Thyroid gland (tissue), 4 donors: ENCODE measurements at regions of chr19 and their contacts with region 1.

Region 1: GRCh38 chr19:7293795-7294570 is at the start of gene INSR:
- DNase-seq: peak; percentile 86 to 91
- H3K4me3 ChIP-seq: peak within 1 kb of the TSS; percentile 37 to 98 (median 65)
- H3K27ac ChIP-seq: peak within 1 kb of the TSS; percentile 44 to 89 (median 77)
- H3K4me1 ChIP-seq: peaks cover 16 to 31% of the 10 kb centered on the region in 2 donors
- H3K27me3 ChIP-seq: no peaks in the 10 kb centered on the region
- CTCF ChIP-seq: no peak
- POLR2A ChIP-seq: peak in 1 of 2 donors; percentile 55
- total RNA-seq, gene INSR: 38.9 to 101 (median 67.7) TPM

Region 2: GRCh38 chr19:7152568-7152967 is 141.4 kb before region 1 on chr19:
- intact Hi-C with region 1: loop called (anchors 5 kb)
- DNase-seq: no peak
- H3K4me3 ChIP-seq: no peak overlapping the region
- H3K27ac ChIP-seq: no peak overlapping the region
- H3K4me1 ChIP-seq: no peaks in the 10 kb centered on the region
- H3K27me3 ChIP-seq: no peaks in the 10 kb centered on the region
- CTCF ChIP-seq: no peak
- POLR2A ChIP-seq: no peak

Region 3: DNA sequence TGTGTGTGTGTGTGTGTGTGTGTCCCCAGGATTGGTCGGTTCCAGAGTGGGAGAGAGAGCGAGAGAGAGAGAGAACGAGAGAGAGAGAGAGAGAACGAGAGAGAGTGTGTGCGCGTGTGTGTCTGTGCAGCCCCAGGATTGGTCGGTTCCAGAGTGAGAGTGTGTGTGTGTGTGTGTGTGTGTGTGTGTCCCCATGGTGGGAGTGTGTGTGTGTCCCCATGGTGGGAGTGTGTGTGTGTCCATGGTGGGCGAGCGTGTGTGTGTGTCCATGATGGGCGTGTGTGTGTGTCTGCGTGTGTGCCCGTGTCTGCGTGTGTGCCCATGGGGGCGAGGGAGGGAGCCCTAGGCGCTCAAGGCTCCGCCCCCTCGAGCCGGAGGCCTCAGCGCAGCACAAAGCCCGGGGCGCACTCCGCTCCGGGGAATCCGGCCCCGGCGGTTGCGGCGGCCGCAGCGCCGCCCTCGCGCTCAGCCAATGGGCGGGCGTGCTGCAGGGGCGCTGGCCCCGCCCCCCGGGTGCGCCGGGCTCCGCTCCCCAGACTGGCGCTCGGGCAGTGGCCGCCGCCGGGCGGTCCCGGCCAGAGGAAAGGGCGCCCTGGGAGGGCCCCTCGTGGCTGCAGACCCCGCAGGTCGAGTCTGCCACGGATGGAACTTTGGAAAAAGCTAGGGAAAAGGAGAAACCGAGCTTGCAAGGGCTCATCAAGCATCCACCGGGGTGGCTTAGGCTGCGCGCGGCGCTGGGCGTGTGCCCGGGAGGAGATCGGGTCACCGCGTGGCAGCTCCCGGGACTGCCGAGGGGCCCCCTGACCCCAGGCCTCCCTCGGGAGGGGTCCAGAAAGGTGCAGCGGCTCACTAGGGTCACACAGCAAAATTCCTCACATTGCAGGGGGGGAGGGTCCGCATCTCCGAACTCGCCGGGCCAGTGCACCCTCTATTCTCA is 96.0 kb before region 1 on chr19:
- intact Hi-C with region 1: loop called (anchors 5 kb)
- DNase-seq: peak; percentile 95
- H3K4me3 ChIP-seq: peak overlapping the region in 2 of 3 donors; percentile 42 to 49
- H3K27ac ChIP-seq: peak overlapping the region; percentile 69 to 84 (median 77)
- H3K4me1 ChIP-seq: peaks cover 6 to 9% of the 10 kb centered on the region in 2 donors
- H3K27me3 ChIP-seq: no peaks in the 10 kb centered on the region
- CTCF ChIP-seq: peak in 4 of 6 experiments; percentile 23 to 33 (median 26)
- POLR2A ChIP-seq: peak in 1 of 2 donors; percentile 63